B cell (primary cell): ENCODE measurements at regions of chr22 and their contacts with region 1.

Region 1: DNA sequence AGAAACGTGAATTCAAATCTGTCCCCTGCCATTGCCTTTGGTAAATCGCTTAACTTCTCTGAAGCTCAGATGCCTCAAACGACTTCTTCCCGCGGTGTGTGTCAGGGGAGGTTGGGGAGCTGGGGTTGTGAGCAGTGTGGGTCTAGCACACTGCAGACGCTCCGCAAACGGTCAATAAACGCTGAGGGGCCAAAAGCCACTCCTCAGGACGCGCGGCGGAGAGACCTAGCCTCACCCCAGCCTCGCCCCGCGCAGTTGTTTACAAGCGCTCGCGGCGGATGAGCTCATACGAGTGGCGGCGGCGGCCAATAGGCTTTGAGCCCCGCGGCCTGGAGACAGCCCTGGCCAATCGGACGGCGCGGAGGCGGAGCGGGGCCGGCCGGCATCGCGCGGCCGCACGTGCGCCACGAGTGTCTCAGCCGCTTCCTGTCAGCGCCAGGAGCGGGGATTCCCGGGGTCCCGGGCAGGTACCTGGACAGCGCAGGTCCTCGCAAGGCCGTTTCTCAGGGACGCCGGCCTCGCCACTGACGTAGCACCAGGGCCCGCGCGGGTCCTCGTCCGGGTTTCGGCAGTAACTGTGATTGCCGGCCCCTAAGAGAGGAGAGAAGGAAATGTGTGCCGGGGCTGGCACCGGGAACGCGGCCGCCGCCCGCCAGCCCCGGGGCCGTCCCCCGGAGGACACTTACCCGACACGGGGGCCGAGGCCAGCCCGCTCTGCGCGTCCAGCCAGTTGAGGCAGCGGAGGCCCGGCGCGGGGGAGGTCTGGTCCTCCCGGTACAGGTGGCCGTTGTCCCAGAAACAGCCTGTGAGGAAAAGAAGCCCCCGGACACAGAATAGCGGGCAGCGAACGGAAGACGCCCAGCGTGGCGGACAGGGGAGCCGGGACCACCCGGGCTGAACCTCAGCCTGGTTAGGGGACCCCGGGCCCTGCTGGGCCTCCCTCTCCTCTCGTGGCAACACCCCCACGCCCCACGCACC is 1.5 kb downstream of the PIK3IP1 start:
- DNase-seq: peak; percentile 97
- ATAC-seq: peak; percentile 88
- H3K4me3 ChIP-seq: peak overlapping the region; percentile 72 to 99 (median 95)
- H3K4me3 Mint-ChIP-seq: peak overlapping the region; percentile 97
- H3K27ac ChIP-seq: peak overlapping the region; percentile 99 to 100
- H3K27ac Mint-ChIP-seq: peak overlapping the region; percentile 100
- H3K4me1 ChIP-seq: peaks cover 68 to 76% of the 10 kb centered on the region in 2 donors
- H3K4me1 Mint-ChIP-seq: peaks cover 67% of the 10 kb centered on the region
- H3K27me3 ChIP-seq: no peaks in the 10 kb centered on the region
- H3K27me3 Mint-ChIP-seq: no peaks in the 10 kb centered on the region
- CTCF ChIP-seq: no peak

Region 2: GRCh38 chr22:30423982-30424963 is 866.5 kb before region 1 on chr22:
- CTCF ChIA-PET with region 1: no interaction called
- POLR2A ChIA-PET with region 1: no interaction called
- intact Hi-C with region 1: loop called (anchors 5 kb)
- DNase-seq: peak; percentile 99
- ATAC-seq: peak; percentile 91
- H3K4me3 ChIP-seq: peak overlapping the region; percentile 54 to 84 (median 76)
- H3K4me3 Mint-ChIP-seq: peak overlapping the region; percentile 99
- H3K27ac ChIP-seq: peak overlapping the region; percentile 78 to 89
- H3K27ac Mint-ChIP-seq: peak overlapping the region; percentile 100
- H3K4me1 ChIP-seq: peaks cover 22 to 40% of the 10 kb centered on the region in 2 donors
- H3K4me1 Mint-ChIP-seq: peaks cover 48% of the 10 kb centered on the region
- H3K27me3 ChIP-seq: no peaks in the 10 kb centered on the region
- H3K27me3 Mint-ChIP-seq: no peaks in the 10 kb centered on the region
- CTCF ChIP-seq: no peak

Region 3: DNA sequence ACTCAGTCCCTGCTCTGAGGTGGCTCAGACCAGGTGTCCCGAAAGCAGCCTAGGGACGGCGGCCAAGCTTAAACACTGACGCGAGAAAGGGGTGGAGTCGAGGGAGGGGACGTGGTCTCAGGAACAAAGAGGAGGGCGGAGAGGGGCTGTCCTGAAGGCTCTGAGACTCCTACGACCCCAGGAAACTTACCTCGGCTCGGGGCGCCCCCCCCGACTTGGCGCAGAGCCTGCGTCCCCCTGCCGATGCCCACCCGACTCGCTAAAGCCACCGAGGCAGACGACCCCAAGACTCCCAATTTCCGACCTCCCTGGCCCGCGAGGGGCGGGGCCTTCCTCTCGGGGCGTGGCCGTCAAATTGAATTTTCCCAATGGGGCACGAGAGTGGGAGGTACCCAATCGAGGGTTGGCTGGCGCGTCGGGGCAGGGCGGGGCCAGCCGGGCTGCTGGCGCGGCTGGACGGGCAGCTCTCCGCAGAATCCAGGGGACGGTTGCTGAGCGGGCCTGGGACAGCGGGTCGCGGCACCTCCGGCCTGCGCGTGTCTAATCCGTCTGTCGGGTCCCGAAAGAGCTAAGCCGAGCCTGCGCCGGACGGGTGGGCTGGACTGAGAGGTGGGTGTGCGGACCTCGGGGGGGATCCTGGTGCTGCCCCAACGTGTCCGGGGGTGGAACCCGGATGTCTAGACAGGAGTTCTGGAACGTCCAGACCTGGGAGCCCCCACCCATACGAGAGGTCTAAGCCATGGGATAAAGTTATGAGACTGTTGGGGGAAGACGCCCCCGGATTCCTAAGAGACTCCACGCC is 209.7 kb before region 1 on chr22 and contains the start of gene SMTN:
- CTCF ChIA-PET with region 1: interaction called, 6 read pairs
- POLR2A ChIA-PET with region 1: interaction called, 5 read pairs
- intact Hi-C with region 1: loop called (anchors 5 kb)
- DNase-seq: peak; percentile 93
- ATAC-seq: peak; percentile 77
- H3K4me3 ChIP-seq: peak within 1 kb of the TSS; percentile 8 to 75 (median 67)
- H3K4me3 Mint-ChIP-seq: peak within 1 kb of the TSS; percentile 92
- H3K27ac ChIP-seq: no peak within 1 kb of the TSS
- H3K27ac Mint-ChIP-seq: peak within 1 kb of the TSS; percentile 58
- H3K4me1 ChIP-seq: peaks cover 22 to 50% of the 10 kb centered on the region in 2 donors
- H3K4me1 Mint-ChIP-seq: peaks cover 34% of the 10 kb centered on the region
- H3K27me3 ChIP-seq: no peaks in the 10 kb centered on the region
- H3K27me3 Mint-ChIP-seq: no peaks in the 10 kb centered on the region
- CTCF ChIP-seq: no peak
- total RNA-seq, gene SMTN: 4.0 and 4.7 TPM in 2 replicates

Region 4: GRCh38 chr22:31272522-31273446 is 18.0 kb before region 1 on chr22:
- CTCF ChIA-PET with region 1: interaction called, 67 read pairs
- POLR2A ChIA-PET with region 1: interaction called, 4 read pairs
- intact Hi-C with region 1: loop called (anchors 1 kb)
- DNase-seq: peak; percentile 67
- ATAC-seq: peak; percentile 49
- H3K4me3 ChIP-seq: no peak overlapping the region
- H3K4me3 Mint-ChIP-seq: no peak overlapping the region
- H3K27ac ChIP-seq: no peak overlapping the region
- H3K27ac Mint-ChIP-seq: no peak overlapping the region
- H3K4me1 ChIP-seq: peaks cover 0 to 3% of the 10 kb centered on the region in 2 donors
- H3K4me1 Mint-ChIP-seq: no peaks in the 10 kb centered on the region
- H3K27me3 ChIP-seq: no peaks in the 10 kb centered on the region
- H3K27me3 Mint-ChIP-seq: no peaks in the 10 kb centered on the region
- CTCF ChIP-seq: peak; percentile 72

Region 5: GRCh38 chr22:31345331-31346254 is 54.8 kb after region 1 on chr22:
- CTCF ChIA-PET with region 1: interaction called, 8 read pairs
- POLR2A ChIA-PET with region 1: interaction called, 18 read pairs
- intact Hi-C with region 1: loop called (anchors 1 kb)
- DNase-seq: peak; percentile 94
- ATAC-seq: peak; percentile 65
- H3K4me3 ChIP-seq: peak overlapping the region in 4 of 5 experiments; percentile 62 to 74 (median 70)
- H3K4me3 Mint-ChIP-seq: peak overlapping the region; percentile 81
- H3K27ac ChIP-seq: peak overlapping the region; percentile 36 to 63
- H3K27ac Mint-ChIP-seq: peak overlapping the region; percentile 86
- H3K4me1 ChIP-seq: peaks cover 32 to 53% of the 10 kb centered on the region in 2 donors
- H3K4me1 Mint-ChIP-seq: peaks cover 51% of the 10 kb centered on the region
- H3K27me3 ChIP-seq: no peaks in the 10 kb centered on the region
- H3K27me3 Mint-ChIP-seq: no peaks in the 10 kb centered on the region
- CTCF ChIP-seq: peak; percentile 79

Region 6: GRCh38 chr22:31749636-31750364 is 459.0 kb after region 1 on chr22 and contains the start of gene PRR14L:
- CTCF ChIA-PET with region 1: no interaction called
- POLR2A ChIA-PET with region 1: no interaction called
- intact Hi-C with region 1: loop called (anchors 5 kb)
- DNase-seq: peak; percentile 99
- ATAC-seq: peak; percentile 74
- H3K4me3 ChIP-seq: peak within 1 kb of the TSS; percentile 81 to 95 (median 83)
- H3K4me3 Mint-ChIP-seq: peak within 1 kb of the TSS; percentile 95
- H3K27ac ChIP-seq: peak within 1 kb of the TSS; percentile 72 to 93
- H3K27ac Mint-ChIP-seq: peak within 1 kb of the TSS; percentile 99
- H3K4me1 ChIP-seq: peaks cover 41 to 43% of the 10 kb centered on the region in 2 donors
- H3K4me1 Mint-ChIP-seq: peaks cover 52% of the 10 kb centered on the region
- H3K27me3 ChIP-seq: no peaks in the 10 kb centered on the region
- H3K27me3 Mint-ChIP-seq: no peaks in the 10 kb centered on the region
- CTCF ChIP-seq: peak; percentile 17
- total RNA-seq, gene PRR14L: 69.6 and 78.5 TPM in 2 replicates